Mammary epithelial cell (primary cell): ENCODE measurements at regions of chr2 and their contacts with region 1.

Region 1: GRCh38 chr2:26846328-26847306 is 1.3 kb upstream of the DPYSL5 start:
- DNase-seq: peak; percentile 52
- H3K4me3 ChIP-seq: no peak overlapping the region
- H3K27ac ChIP-seq: no peak overlapping the region
- H3K4me1 ChIP-seq: peaks cover 23% of the 10 kb centered on the region
- H3K27me3 ChIP-seq: peaks cover 36% of the 10 kb centered on the region
- CTCF ChIP-seq: peak; percentile 63 to 77

Region 2: GRCh38 chr2:26605195-26605998 is 241.2 kb before region 1 on chr2:
- CTCF ChIA-PET with region 1: no interaction called
- dilution Hi-C with region 1: no loop called
- in situ Hi-C with region 1: no loop called
- intact Hi-C with region 1: loop called (anchors 10 kb)
- DNase-seq: peak; percentile 35
- H3K4me3 ChIP-seq: no peak overlapping the region
- H3K27ac ChIP-seq: no peak overlapping the region
- H3K4me1 ChIP-seq: peaks cover 6% of the 10 kb centered on the region
- H3K27me3 ChIP-seq: no peaks in the 10 kb centered on the region
- CTCF ChIP-seq: peak; percentile 77 to 90

Region 3: DNA sequence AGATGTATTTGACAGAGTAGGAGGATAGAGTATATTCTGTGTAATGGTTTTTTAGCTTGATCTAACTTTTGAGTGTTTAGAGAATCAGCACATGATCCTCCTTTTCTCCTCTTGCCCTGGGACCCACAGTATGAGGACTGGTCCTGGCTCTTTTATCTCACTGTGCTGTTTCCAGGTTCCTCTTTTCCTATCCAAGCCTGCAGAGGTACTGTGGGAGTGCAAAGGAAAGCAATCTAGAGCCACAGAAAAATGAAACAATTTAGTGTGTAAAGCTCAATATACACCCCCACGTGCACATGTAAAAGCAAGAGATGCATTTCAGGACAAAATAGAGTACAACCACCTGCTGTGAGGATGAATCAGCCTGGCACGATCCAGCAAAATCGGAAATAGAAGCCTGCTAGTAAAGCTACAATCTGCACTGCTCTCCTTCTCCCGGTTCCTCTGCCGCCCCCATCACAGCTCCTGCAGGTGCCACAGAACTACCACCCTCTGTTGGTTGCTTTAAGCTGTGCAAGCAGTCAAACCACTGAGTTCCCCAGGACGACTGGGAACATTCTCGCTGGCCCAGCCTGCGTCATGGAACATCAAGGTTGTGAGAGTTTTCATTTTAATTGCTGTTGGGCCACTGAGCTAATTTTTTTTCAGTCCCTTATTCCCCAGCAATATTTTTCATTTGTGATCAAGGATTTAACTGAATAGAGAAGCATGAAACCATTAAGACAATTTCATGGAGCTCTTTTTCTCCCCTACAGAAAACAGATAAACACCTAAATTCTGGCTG is 76.0 kb after region 1 on chr2:
- CTCF ChIA-PET with region 1: interaction called, 3 read pairs
- dilution Hi-C with region 1: no loop called
- in situ Hi-C with region 1: no loop called
- intact Hi-C with region 1: loop called (anchors 1 kb)
- DNase-seq: peak; percentile 45
- H3K4me3 ChIP-seq: no peak overlapping the region
- H3K27ac ChIP-seq: no peak overlapping the region
- H3K4me1 ChIP-seq: no peaks in the 10 kb centered on the region
- H3K27me3 ChIP-seq: no peaks in the 10 kb centered on the region
- CTCF ChIP-seq: peak; percentile 44 to 52

Region 4: DNA sequence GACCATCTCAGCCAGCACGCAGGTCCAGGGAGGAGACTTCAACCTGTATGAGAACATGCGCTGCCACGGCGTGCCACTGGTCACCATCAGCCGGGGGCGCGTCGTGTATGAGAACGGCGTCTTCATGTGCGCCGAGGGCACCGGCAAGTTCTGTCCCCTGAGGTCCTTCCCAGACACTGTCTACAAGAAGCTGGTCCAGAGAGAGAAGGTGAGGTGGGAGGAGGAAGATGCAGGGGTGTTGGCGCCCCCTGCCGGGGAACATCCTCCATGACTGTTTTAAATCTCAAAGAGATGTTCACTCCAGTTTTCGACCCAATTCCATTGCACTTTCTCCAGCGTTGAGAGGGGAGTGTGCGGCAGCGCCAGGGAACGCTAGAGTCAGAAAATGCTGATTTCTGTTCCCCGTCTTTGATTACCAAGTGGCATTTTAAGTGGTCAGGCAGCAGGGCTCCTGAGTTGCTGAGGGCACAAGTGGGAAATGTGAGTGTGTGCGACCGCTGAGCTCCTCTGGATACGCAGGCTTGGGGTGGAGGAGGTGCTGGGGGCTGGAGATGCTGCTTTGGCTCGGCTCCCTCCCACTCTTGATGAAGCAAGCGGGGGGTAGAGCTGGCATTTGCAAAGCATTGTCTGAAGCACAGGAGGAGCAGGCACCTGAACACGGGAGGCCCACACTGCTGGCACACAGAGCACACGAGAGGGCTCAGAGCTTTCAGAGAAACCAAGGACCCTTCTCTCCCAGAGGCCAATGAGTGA is 96.1 kb after region 1 on chr2:
- CTCF ChIA-PET with region 1: no interaction called
- dilution Hi-C with region 1: no loop called
- in situ Hi-C with region 1: loop called (anchors 5 to 10 kb)
- intact Hi-C with region 1: loop called (anchors 1 kb)
- DNase-seq: peak; percentile 34
- H3K4me3 ChIP-seq: no peak overlapping the region
- H3K27ac ChIP-seq: no peak overlapping the region
- H3K4me1 ChIP-seq: peaks cover 9% of the 10 kb centered on the region
- H3K27me3 ChIP-seq: no peaks in the 10 kb centered on the region
- CTCF ChIP-seq: peak; percentile 74 to 85

Region 5: DNA sequence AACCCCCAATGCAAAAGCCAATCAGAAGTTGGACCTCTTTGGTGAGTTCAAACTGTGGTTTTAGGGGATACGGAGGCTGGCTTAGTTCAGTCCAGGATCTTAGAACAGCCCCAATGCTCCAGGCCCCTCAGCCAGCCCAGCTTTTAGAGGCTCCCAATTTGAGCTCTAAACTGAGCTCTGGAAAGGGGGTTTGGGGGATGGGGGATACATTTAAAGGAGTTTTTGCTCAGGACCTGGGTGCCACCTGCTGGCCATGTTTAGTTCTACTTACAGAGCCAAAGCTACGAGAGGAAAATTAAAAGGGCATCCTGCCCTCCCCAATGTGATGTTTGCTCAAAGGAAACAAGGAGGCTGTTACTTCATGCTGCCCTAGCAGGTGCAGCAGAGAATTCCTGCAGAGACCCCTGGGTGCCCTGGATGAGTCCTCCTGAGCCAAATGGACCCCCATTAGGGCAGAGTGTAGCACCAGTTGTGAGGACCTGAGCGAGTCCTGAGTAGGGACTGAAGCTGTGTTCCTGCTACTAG is 170.2 kb after region 1 on chr2:
- CTCF ChIA-PET with region 1: interaction called, 6 read pairs
- dilution Hi-C with region 1: no loop called
- in situ Hi-C with region 1: no loop called
- intact Hi-C with region 1: loop called (anchors 1 kb)
- DNase-seq: peak; percentile 25
- H3K4me3 ChIP-seq: no peak overlapping the region
- H3K27ac ChIP-seq: no peak overlapping the region
- H3K4me1 ChIP-seq: peaks cover 20% of the 10 kb centered on the region
- H3K27me3 ChIP-seq: no peaks in the 10 kb centered on the region
- CTCF ChIP-seq: peak; percentile 63 to 71

Region 6: GRCh38 chr2:27291865-27292264 is 445.2 kb after region 1 on chr2:
- CTCF ChIA-PET with region 1: no interaction called
- dilution Hi-C with region 1: no loop called
- in situ Hi-C with region 1: loop called in 1 of 2 experiments (anchors 25 kb)
- intact Hi-C with region 1: no loop called
- DNase-seq: peak; percentile 10
- H3K4me3 ChIP-seq: no peak overlapping the region
- H3K27ac ChIP-seq: no peak overlapping the region
- H3K4me1 ChIP-seq: peaks cover 13% of the 10 kb centered on the region
- H3K27me3 ChIP-seq: no peaks in the 10 kb centered on the region
- CTCF ChIP-seq: no peak

Region 7: DNA sequence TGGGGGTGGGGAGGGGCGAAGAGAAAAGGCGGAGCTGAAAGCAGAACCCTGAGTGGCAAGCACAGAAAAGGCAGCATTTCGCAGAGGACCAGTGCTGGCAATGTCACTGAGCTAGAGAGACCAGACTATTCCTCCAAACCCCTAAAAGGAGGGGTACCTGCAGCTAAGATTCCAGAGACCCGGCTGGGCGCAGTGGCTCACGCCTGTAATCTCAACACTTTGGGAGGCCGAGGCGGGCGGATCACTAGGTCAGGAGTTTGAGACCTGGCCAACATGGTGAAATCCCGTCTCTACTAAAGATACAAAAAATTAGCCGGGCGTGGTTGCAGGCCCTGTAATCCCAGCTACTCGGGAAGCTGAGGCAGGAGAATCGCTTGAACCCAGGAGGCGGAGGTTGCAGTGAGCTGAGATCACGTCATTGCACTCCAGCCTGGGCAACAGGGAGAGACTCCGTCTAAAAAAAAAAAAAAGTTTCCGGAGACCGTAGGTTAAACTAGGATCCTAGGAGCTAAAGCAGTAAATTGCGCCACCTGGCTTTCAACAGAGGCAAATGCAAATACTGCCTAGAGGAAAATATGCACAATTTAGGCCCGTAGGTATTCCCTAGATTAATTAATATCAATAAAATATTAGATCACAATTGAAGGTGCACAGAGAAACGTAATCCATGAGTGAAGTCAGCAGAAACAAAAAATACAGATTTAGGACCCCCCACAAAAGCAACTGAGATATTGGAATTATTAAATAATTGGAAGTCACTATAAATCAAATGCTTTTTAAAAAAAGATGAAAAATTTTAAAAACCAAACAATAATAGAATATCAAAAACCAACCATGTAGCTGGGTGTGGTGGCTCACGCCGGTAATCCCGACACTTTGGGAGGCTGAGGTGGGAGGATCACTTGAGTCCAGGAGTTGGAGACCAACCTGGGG is 456.7 kb after region 1 on chr2:
- CTCF ChIA-PET with region 1: no interaction called
- dilution Hi-C with region 1: no loop called
- in situ Hi-C with region 1: loop called in 1 of 2 experiments (anchors 25 kb)
- intact Hi-C with region 1: loop called (anchors 10 kb)
- DNase-seq: peak; percentile 57
- H3K4me3 ChIP-seq: no peak overlapping the region
- H3K27ac ChIP-seq: no peak overlapping the region
- H3K4me1 ChIP-seq: peaks cover 3% of the 10 kb centered on the region
- H3K27me3 ChIP-seq: peaks cover 22% of the 10 kb centered on the region
- CTCF ChIP-seq: peak; percentile 86